T-cell (primary cell): ENCODE measurements at regions of chr4 and their contacts with region 1.

Region 1: GRCh38 chr4:159201168-159201567 is 98.3 kb downstream of the RAPGEF2 start:
- DNase-seq: no peak
- ATAC-seq: no peak
- H3K4me3 ChIP-seq: no peak overlapping the region
- H3K4me3 Mint-ChIP-seq: no peak overlapping the region
- H3K27ac ChIP-seq: no peak overlapping the region
- H3K27ac Mint-ChIP-seq: no peak overlapping the region
- H3K4me1 ChIP-seq: peaks cover 2 to 6% of the 10 kb centered on the region in 2 experiments
- H3K4me1 Mint-ChIP-seq: peaks cover 11 to 22% (median 21%) of the 10 kb centered on the region in 3 donors
- H3K27me3 ChIP-seq: no peaks in the 10 kb centered on the region
- H3K27me3 Mint-ChIP-seq: no peaks in the 10 kb centered on the region

Region 2: GRCh38 chr4:158741326-158742025 is 459.7 kb before region 1 on chr4:
- CTCF ChIA-PET with region 1: interaction called in 1 of 2 experiments, 14 read pairs
- POLR2A ChIA-PET with region 1: no interaction called
- DNase-seq: no peak
- ATAC-seq: no peak
- H3K4me3 ChIP-seq: no peak overlapping the region
- H3K4me3 Mint-ChIP-seq: no peak overlapping the region
- H3K27ac ChIP-seq: no peak overlapping the region
- H3K27ac Mint-ChIP-seq: no peak overlapping the region
- H3K4me1 ChIP-seq: no peaks in the 10 kb centered on the region
- H3K4me1 Mint-ChIP-seq: no peaks in the 10 kb centered on the region
- H3K27me3 ChIP-seq: peaks cover 0 to 9% of the 10 kb centered on the region in 2 experiments
- H3K27me3 Mint-ChIP-seq: peaks cover 6 to 9% of the 10 kb centered on the region in 2 donors

Region 3: DNA sequence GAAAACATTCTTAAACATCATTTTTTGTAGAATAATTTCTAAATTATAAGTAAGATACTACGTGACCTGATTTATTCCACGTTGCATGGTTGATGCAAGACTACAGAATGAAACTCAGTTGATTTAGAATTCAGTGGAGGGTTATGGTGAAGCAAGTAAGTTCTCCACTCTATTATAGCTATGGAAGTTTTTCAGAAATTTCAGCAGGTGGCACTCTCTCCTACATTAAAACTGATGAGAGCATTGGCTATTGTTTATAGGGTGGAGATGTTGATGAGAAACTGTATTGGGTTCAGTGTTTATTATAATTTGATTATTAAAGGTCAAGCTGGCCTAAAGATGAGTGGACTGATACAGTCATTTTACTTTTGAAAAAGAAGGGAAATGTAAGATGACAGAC is 344.3 kb before region 1 on chr4:
- CTCF ChIA-PET with region 1: interaction called, 7 to 12 read pairs
- POLR2A ChIA-PET with region 1: no interaction called
- DNase-seq: peak in 1 of 35 experiments; percentile 52
- ATAC-seq: peak in 2 of 4 experiments; percentile 35 to 55
- H3K4me3 ChIP-seq: no peak overlapping the region
- H3K4me3 Mint-ChIP-seq: no peak overlapping the region
- H3K27ac ChIP-seq: no peak overlapping the region
- H3K27ac Mint-ChIP-seq: no peak overlapping the region
- H3K4me1 ChIP-seq: no peaks in the 10 kb centered on the region
- H3K4me1 Mint-ChIP-seq: no peaks in the 10 kb centered on the region
- H3K27me3 ChIP-seq: no peaks in the 10 kb centered on the region
- H3K27me3 Mint-ChIP-seq: no peaks in the 10 kb centered on the region

Region 4: GRCh38 chr4:159252491-159252890 is 51.3 kb after region 1 on chr4:
- CTCF ChIA-PET with region 1: no interaction called
- POLR2A ChIA-PET with region 1: no interaction called
- DNase-seq: no peak
- ATAC-seq: no peak
- H3K4me3 ChIP-seq: no peak overlapping the region
- H3K4me3 Mint-ChIP-seq: no peak overlapping the region
- H3K27ac ChIP-seq: no peak overlapping the region
- H3K27ac Mint-ChIP-seq: no peak overlapping the region
- H3K4me1 ChIP-seq: no peaks in the 10 kb centered on the region
- H3K4me1 Mint-ChIP-seq: peaks cover 10 to 18% (median 17%) of the 10 kb centered on the region in 3 donors
- H3K27me3 ChIP-seq: no peaks in the 10 kb centered on the region
- H3K27me3 Mint-ChIP-seq: no peaks in the 10 kb centered on the region